Naive thymus-derived CD4-positive, alpha-beta T cell (primary cell): ENCODE measurements at regions of chr1 and their contacts with region 1.

Region 1: DNA sequence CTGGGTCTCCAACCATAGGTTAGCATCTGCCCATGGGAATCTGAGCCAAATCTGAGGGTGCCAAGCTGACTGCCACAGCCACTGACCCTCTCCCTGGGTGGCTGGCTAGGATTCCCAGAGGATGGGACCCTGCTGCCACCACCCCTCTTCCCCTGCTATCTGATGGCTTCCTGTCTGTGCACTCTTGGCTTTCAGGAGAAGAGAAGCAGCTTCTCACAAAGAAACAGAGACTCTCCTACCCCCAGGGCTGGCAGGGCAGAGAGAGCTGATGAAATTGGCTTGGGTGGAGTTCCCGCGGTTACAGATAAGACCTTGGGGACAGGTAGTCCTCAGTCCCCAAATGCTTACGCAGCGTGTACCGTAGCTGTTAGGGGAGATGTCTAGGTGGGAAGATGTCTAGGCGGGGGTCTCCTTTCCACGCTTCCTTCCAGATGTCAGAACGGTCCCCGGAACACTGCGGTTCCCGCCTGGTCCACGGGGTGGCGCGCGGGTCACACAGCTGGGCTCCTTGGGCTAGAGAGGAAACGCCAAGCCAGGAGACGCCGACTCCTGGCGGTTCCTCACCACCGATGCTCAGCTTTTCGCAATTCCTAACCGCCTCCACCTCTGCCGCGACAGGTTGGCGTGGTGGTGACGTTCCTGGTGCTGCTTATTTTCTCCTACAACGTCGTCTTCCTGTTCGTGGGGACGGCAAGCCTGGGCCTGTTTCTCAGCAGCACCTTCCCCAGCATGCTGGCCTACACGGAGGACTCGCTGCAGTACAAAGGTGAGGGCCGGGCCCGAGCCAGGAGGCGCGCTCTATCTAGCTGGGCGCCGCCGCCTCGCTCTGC is 40.1 kb downstream of the ELK4 start:
- DNase-seq: peak; percentile 86 to 94 (median 91)
- ATAC-seq: peak; percentile 95
- H3K4me3 ChIP-seq: peak overlapping the region; percentile 55
- H3K4me3 Mint-ChIP-seq: peak overlapping the region; percentile 77 to 97 (median 91)
- H3K27ac ChIP-seq: peak overlapping the region; percentile 85
- H3K27ac Mint-ChIP-seq: peak overlapping the region; percentile 88 to 97 (median 95)
- H3K4me1 ChIP-seq: peaks cover 8 to 32% of the 10 kb centered on the region in 2 donors
- H3K4me1 Mint-ChIP-seq: peaks cover 19 to 65% (median 61%) of the 10 kb centered on the region in 7 donors
- H3K27me3 ChIP-seq: no peaks in the 10 kb centered on the region
- H3K27me3 Mint-ChIP-seq: peaks cover 0 to 4% (median 0%) of the 10 kb centered on the region in 5 donors

Region 2: GRCh38 chr1:205121660-205122488 is 469.9 kb before region 1 on chr1 and contains the start of gene RBBP5:
- CTCF ChIA-PET with region 1: no interaction called
- POLR2A ChIA-PET with region 1: no interaction called
- intact Hi-C with region 1: loop called in 1 of 2 experiments (anchors 5 kb)
- DNase-seq: peak; percentile 87 to 97 (median 93)
- ATAC-seq: peak; percentile 98
- H3K4me3 ChIP-seq: peak within 1 kb of the TSS; percentile 89
- H3K4me3 Mint-ChIP-seq: peak within 1 kb of the TSS; percentile 89 to 99 (median 96)
- H3K27ac ChIP-seq: peak within 1 kb of the TSS; percentile 86
- H3K27ac Mint-ChIP-seq: peak within 1 kb of the TSS; percentile 98 to 100 (median 99)
- H3K4me1 ChIP-seq: peaks cover 18 to 24% of the 10 kb centered on the region in 2 donors
- H3K4me1 Mint-ChIP-seq: peaks cover 30 to 56% (median 51%) of the 10 kb centered on the region in 7 donors
- H3K27me3 ChIP-seq: no peaks in the 10 kb centered on the region
- H3K27me3 Mint-ChIP-seq: no peaks in the 10 kb centered on the region
- total RNA-seq, gene RBBP5: 11.0 to 31.5 (median 21.0) TPM

Region 3: DNA sequence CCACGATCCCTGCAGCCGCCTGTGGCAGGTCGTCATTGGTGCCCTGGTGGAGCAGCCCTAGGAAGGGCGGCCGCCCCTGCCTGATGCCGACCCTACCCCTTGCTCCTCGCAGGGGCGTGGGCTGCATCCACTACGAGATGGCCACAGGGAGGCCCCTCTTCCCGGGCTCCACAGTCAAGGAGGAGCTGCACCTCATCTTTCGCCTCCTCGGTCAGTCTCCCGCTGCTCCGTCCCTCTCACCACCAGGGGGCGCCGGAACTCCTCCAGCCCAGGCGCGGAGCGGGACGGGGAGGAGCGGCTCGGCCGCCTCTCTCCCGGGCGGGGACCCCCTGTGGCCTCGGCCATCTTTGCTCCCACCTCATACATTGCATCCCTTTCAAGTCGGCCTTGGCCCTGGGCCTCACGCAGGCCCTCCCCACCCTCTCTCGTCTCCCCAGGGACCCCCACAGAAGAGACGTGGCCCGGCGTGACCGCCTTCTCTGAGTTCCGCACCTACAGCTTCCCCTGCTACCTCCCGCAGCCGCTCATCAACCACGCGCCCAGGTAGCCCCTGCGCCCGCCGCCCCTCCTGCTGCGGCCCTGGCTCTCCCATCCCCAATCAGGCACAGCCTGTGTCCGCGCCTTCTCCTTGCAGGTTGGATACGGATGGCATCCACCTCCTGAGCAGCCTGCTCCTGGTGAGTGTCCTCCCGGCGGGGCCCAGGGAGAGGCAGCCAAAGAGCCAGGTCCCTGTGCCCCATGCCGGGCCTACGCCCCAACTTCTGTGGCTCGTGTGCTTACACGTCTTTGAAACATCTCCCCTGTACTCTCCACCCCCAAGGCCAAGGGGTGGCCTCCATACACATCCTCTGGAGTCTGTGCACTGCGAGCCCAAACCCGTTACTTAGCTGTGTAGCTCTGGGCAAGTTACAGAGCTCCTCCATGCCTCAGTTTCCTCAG is 62.6 kb before region 1 on chr1:
- CTCF ChIA-PET with region 1: interaction called, 16 read pairs
- POLR2A ChIA-PET with region 1: no interaction called
- intact Hi-C with region 1: loop called (anchors 1 to 2 kb)
- DNase-seq: peak; percentile 58 to 90 (median 78)
- ATAC-seq: peak; percentile 82
- H3K4me3 ChIP-seq: no peak overlapping the region
- H3K4me3 Mint-ChIP-seq: peak overlapping the region in 9 of 10 donors; percentile 23 to 68 (median 62)
- H3K27ac ChIP-seq: no peak overlapping the region
- H3K27ac Mint-ChIP-seq: peak overlapping the region in 3 of 9 donors; percentile 8 to 58 (median 56)
- H3K4me1 ChIP-seq: no peaks in the 10 kb centered on the region
- H3K4me1 Mint-ChIP-seq: peaks cover 0 to 5% (median 0%) of the 10 kb centered on the region in 7 donors
- H3K27me3 ChIP-seq: no peaks in the 10 kb centered on the region
- H3K27me3 Mint-ChIP-seq: peaks cover 0 to 5% (median 0%) of the 10 kb centered on the region in 5 donors

Region 4: GRCh38 chr1:205711104-205712020 is 119.6 kb after region 1 on chr1:
- CTCF ChIA-PET with region 1: interaction called, 11 read pairs
- POLR2A ChIA-PET with region 1: interaction called, 4 read pairs
- intact Hi-C with region 1: loop called (anchors 1 kb)
- DNase-seq: peak in 8 of 9 donors; percentile 36 to 72 (median 64)
- ATAC-seq: peak; percentile 91
- H3K4me3 ChIP-seq: no peak overlapping the region
- H3K4me3 Mint-ChIP-seq: no peak overlapping the region
- H3K27ac ChIP-seq: no peak overlapping the region
- H3K27ac Mint-ChIP-seq: peak overlapping the region in 6 of 9 donors; percentile 7 to 87 (median 15)
- H3K4me1 ChIP-seq: no peaks in the 10 kb centered on the region
- H3K4me1 Mint-ChIP-seq: peaks cover 9 to 28% (median 20%) of the 10 kb centered on the region in 7 donors
- H3K27me3 ChIP-seq: no peaks in the 10 kb centered on the region
- H3K27me3 Mint-ChIP-seq: no peaks in the 10 kb centered on the region

Region 5: DNA sequence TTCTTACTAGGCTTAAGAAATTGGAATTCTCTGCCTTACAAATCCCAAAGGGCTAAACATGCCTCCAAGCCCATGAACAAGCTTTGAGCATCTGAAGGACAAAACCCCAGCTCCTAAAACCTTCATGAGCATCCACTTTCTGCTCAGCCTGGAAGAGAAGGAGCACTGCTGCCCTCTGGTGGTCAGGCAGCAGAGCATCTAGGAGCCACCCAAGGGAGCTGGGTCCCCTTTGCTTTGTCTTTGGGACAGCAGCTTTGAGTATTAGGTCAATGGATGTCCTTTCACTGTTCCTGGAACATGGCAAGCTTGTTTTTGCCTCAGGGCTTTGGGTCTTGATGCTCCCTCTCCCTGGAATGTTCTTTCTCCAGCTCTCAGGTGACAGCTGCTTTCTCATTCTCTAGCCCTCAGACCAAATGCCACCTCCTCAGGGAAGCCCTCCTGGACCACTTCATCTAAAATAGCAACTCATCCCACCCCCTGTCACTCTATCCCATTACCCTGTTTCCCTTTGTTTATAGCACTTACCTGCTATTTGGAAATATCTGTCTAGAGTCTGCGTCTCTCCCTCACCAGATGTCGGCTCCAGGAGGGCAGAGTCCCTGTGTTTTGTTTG is 385.8 kb after region 1 on chr1:
- CTCF ChIA-PET with region 1: interaction called, 8 read pairs
- POLR2A ChIA-PET with region 1: no interaction called
- intact Hi-C with region 1: loop called in 1 of 2 experiments (anchors 1 kb)
- DNase-seq: peak; percentile 45 to 78 (median 68)
- ATAC-seq: peak; percentile 82
- H3K4me3 ChIP-seq: no peak overlapping the region
- H3K4me3 Mint-ChIP-seq: no peak overlapping the region
- H3K27ac ChIP-seq: no peak overlapping the region
- H3K27ac Mint-ChIP-seq: no peak overlapping the region
- H3K4me1 ChIP-seq: no peaks in the 10 kb centered on the region
- H3K4me1 Mint-ChIP-seq: peaks cover 0 to 2% (median 0%) of the 10 kb centered on the region in 7 donors
- H3K27me3 ChIP-seq: no peaks in the 10 kb centered on the region
- H3K27me3 Mint-ChIP-seq: peaks cover 0 to 2% (median 0%) of the 10 kb centered on the region in 5 donors